ENCODE measurements at regions of chr7 and their contacts with region 1.

Region 1: DNA sequence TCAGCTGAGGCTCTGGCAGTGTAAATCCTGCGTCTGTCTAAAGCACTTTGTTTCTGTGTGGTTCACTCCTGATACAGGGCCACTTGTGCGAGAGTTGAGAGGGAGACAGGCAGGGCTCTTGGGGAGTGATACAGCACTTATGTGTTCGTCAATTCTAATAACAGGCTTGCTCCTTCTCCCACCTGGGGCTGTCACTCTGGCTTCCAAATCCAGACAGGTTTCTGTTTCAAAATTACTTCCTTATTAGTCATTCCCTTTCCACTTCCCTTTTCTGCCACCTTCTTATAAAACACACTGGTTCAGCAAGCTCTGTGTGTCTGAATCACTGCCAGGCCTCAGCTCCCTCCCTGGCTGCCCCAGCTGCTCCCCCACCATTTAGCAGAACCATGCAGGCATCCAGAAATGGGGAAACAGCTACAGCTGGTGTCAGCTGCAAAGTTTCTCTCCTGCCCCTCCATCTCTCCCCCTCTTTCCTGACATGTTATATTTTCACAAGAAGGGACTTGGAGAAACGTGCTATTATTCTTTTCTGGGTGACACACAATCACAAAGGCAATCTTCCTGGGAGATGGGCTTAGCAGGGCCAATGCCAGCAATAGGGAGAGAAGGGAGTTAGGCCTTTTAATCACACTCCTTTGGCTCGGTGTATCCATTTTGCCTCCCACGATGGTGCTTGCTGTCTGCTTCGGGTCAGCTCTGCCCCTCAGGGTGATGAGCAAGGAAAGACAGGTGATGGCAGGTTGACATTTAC is 58.4 kb upstream of the ZNRF2 start:
- DNase-seq: peak; percentile 97
- H3K4me3 ChIP-seq: no peak overlapping the region
- H3K27ac ChIP-seq: peak overlapping the region; percentile 83
- H3K4me1 ChIP-seq: peaks cover 37% of the 10 kb centered on the region
- H3K27me3 ChIP-seq: no peaks in the 10 kb centered on the region
- CTCF ChIP-seq: no peak

Region 2: GRCh38 chr7:30142710-30143109 is 83.3 kb before region 1 on chr7:
- CTCF ChIA-PET with region 1: no interaction called
- dilution Hi-C with region 1: no loop called
- in situ Hi-C with region 1: no loop called
- intact Hi-C with region 1: no loop called
- DNase-seq: peak; percentile 63
- H3K4me3 ChIP-seq: no peak overlapping the region
- H3K27ac ChIP-seq: no peak overlapping the region
- H3K4me1 ChIP-seq: peaks cover 27% of the 10 kb centered on the region
- H3K27me3 ChIP-seq: no peaks in the 10 kb centered on the region
- CTCF ChIP-seq: no peak

Region 3: GRCh38 chr7:30184791-30185487 is 41.1 kb before region 1 on chr7:
- CTCF ChIA-PET with region 1: no interaction called
- dilution Hi-C with region 1: loop called (anchors 5 kb)
- in situ Hi-C with region 1: no loop called
- intact Hi-C with region 1: no loop called
- DNase-seq: peak; percentile 16
- H3K4me3 ChIP-seq: no peak overlapping the region
- H3K27ac ChIP-seq: no peak overlapping the region
- H3K4me1 ChIP-seq: no peaks in the 10 kb centered on the region
- H3K27me3 ChIP-seq: no peaks in the 10 kb centered on the region
- CTCF ChIP-seq: no peak

Region 4: DNA sequence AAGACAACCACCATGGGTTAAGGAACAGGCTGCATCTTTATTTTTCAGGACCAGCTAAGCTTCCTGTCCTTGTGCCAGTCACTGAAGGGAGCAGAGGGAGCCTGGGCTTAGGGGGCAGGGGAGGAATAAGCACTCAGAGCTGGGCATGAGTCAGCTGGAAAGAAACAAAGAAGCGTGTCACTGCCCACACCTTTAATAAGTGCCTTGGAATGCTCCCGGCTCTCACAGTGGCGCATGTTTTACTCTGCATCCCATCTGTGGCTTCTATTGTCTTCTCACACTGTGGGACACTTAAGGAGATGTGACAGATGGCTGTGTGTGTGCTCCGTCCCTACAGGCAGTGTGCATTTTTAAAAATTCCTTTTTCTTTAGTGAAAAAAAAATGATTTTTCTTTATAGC is 19.5 kb before region 1 on chr7:
- CTCF ChIA-PET with region 1: interaction called, 4 read pairs
- dilution Hi-C with region 1: no loop called
- in situ Hi-C with region 1: no loop called
- intact Hi-C with region 1: loop called (anchors 1 kb)
- DNase-seq: peak; percentile 87
- H3K4me3 ChIP-seq: peak overlapping the region in 1 of 3 experiments; percentile 18
- H3K27ac ChIP-seq: peak overlapping the region; percentile 85
- H3K4me1 ChIP-seq: peaks cover 14% of the 10 kb centered on the region
- H3K27me3 ChIP-seq: no peaks in the 10 kb centered on the region
- CTCF ChIP-seq: no peak

Region 5: GRCh38 chr7:30240106-30240800 is 14.2 kb after region 1 on chr7:
- CTCF ChIA-PET with region 1: interaction called, 3 read pairs
- dilution Hi-C with region 1: no loop called
- in situ Hi-C with region 1: no loop called
- intact Hi-C with region 1: loop called (anchors 2 kb)
- DNase-seq: peak; percentile 61
- H3K4me3 ChIP-seq: no peak overlapping the region
- H3K27ac ChIP-seq: no peak overlapping the region
- H3K4me1 ChIP-seq: peaks cover 37% of the 10 kb centered on the region
- H3K27me3 ChIP-seq: no peaks in the 10 kb centered on the region
- CTCF ChIP-seq: no peak

Region 6: DNA sequence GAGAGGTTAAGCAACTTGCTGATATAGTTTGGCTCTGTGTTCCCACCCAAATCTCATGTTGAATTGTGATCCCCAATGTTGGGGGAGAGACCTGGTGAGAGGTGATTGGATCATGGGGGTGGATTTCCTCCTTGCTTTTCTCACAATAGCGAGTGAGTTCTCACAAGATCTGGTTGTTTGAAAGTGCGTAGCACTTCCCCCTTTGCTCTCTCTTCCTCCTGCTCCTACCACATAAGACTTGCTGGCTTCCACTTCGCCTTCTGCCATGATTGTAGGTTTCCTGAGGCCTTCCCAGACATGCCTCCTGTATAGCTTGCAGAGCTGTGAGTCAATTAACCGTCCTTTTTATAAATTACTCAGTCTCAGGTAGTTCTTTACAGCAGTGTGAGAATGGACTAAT is 44.9 kb after region 1 on chr7:
- CTCF ChIA-PET with region 1: no interaction called
- dilution Hi-C with region 1: no loop called
- in situ Hi-C with region 1: no loop called
- intact Hi-C with region 1: loop called (anchors 5 kb)
- DNase-seq: no peak
- H3K4me3 ChIP-seq: no peak overlapping the region
- H3K27ac ChIP-seq: no peak overlapping the region
- H3K4me1 ChIP-seq: no peaks in the 10 kb centered on the region
- H3K27me3 ChIP-seq: no peaks in the 10 kb centered on the region
- CTCF ChIP-seq: no peak

Region 7: GRCh38 chr7:30531286-30531685 is 305.2 kb after region 1 on chr7:
- CTCF ChIA-PET with region 1: no interaction called
- dilution Hi-C with region 1: no loop called
- in situ Hi-C with region 1: no loop called
- intact Hi-C with region 1: no loop called
- DNase-seq: peak; percentile 66
- H3K4me3 ChIP-seq: no peak overlapping the region
- H3K27ac ChIP-seq: no peak overlapping the region
- H3K4me1 ChIP-seq: peaks cover 4% of the 10 kb centered on the region
- H3K27me3 ChIP-seq: no peaks in the 10 kb centered on the region
- CTCF ChIP-seq: no peak

Measured in mammary epithelial cell (primary cell).